Breast epithelium (tissue), 4 donors: ENCODE measurements at regions of chr3 and their contacts with region 1.

Region 1: DNA sequence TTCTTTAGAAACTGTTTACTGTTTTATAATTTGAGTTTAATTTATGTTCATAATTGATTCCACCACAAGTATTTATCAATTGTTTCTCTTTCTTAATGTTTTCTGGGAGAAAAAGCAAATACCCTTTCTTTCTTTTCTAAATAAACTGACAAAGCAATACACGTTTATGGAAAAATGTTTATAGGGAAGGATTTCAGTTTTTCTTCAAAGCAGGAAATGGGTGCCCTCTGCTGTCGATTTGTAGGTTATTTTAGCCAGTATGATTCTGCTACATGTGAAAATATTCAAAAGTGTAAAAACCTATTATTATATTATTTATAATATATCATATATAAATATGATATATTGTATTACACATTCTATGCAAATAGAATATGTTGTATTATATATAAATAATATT is 921.0 kb upstream of the ROBO1 start:
- DNase-seq: no peak
- H3K4me3 ChIP-seq: no peak overlapping the region
- H3K27ac ChIP-seq: no peak overlapping the region
- H3K4me1 ChIP-seq: no peaks in the 10 kb centered on the region
- H3K27me3 ChIP-seq: no peaks in the 10 kb centered on the region
- CTCF ChIP-seq: no peak
- POLR2A ChIP-seq: no peak

Region 2: DNA sequence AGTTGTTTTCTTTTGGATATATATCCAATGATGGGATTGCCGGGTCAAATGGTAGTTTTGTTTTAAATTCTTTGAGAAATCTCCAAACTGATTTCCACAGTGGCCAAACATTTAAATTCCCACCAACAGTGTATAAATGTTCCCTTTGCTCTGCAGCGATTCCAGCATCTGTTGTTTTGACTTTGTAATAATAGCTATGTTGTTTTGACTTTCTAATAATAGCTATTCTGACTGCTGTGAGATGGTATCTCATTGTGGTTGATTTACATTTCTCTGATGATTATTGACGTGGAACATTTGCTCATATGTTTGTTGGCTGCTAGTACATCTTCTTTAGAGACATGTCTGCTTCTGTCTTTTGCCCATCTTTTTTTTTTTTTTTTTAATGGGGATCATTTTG is 1404.8 kb after region 1 on chr3:
- intact Hi-C with region 1: loop called (anchors 10 kb)
- DNase-seq: no peak
- H3K4me3 ChIP-seq: no peak overlapping the region
- H3K27ac ChIP-seq: no peak overlapping the region
- H3K4me1 ChIP-seq: no peaks in the 10 kb centered on the region
- H3K27me3 ChIP-seq: no peaks in the 10 kb centered on the region
- CTCF ChIP-seq: no peak
- POLR2A ChIP-seq: no peak